Naive thymus-derived CD4-positive, alpha-beta T cell (primary cell): ENCODE measurements at regions of chr19 and their contacts with region 1.

Region 1: DNA sequence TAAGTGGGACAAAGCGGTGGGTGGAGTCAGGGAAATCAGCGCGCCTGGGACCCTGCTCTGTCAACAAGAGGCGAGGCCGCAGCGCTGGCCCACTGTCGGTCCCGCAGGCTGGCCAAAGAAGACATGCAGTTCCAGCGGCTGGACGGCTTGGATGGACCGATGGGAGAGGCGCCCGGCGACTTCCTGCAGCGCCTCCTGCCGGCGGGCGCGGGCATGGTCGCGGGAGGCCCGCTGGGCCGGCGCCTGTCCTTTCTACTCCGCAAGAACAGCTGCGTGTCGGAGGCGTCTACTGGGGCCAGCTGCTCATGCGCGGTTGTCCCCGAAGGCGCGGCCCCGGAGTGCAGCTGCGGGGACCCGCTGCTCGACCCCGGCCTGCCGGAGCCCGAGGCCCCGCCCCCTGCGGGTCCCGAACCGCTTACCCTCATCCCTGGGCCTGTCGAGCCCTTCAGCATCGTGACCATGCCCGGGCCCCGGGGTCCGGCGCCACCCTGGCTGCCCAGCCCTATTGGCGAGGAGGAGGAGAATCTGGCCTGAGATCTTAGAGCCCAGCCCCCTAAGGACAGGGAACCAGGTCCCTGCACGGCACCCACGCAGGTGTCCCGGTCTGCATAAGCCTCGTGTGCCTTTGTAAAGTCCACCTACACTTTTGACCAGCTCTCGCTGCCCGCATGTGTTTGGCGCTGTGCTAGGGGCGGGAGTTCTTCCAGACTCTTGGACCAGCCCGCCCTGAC is 6.1 kb downstream of the BEST2 start:
- DNase-seq: peak in 8 of 9 donors; percentile 40 to 84 (median 57)
- ATAC-seq: peak; percentile 87
- H3K4me3 ChIP-seq: peak overlapping the region; percentile 27
- H3K4me3 Mint-ChIP-seq: peak overlapping the region in 8 of 10 donors; percentile 13 to 64 (median 46)
- H3K27ac ChIP-seq: no peak overlapping the region
- H3K27ac Mint-ChIP-seq: no peak overlapping the region
- H3K4me1 ChIP-seq: peaks cover 0 to 7% of the 10 kb centered on the region in 2 donors
- H3K4me1 Mint-ChIP-seq: peaks cover 0 to 10% (median 8%) of the 10 kb centered on the region in 7 donors
- H3K27me3 ChIP-seq: no peaks in the 10 kb centered on the region
- H3K27me3 Mint-ChIP-seq: peaks cover 10 to 20% (median 11%) of the 10 kb centered on the region in 5 donors

Region 2: GRCh38 chr19:12564016-12564664 is 193.6 kb before region 1 on chr19:
- CTCF ChIA-PET with region 1: interaction called, 4 read pairs
- POLR2A ChIA-PET with region 1: no interaction called
- intact Hi-C with region 1: loop called (anchors 1 kb)
- DNase-seq: peak; percentile 79 to 96 (median 88)
- ATAC-seq: peak; percentile 100
- H3K4me3 ChIP-seq: no peak overlapping the region
- H3K4me3 Mint-ChIP-seq: peak overlapping the region in 1 of 10 donors; percentile 33
- H3K27ac ChIP-seq: no peak overlapping the region
- H3K27ac Mint-ChIP-seq: peak overlapping the region in 2 of 9 donors; percentile 3 to 51
- H3K4me1 ChIP-seq: no peaks in the 10 kb centered on the region
- H3K4me1 Mint-ChIP-seq: peaks cover 0 to 6% (median 5%) of the 10 kb centered on the region in 7 donors
- H3K27me3 ChIP-seq: no peaks in the 10 kb centered on the region
- H3K27me3 Mint-ChIP-seq: no peaks in the 10 kb centered on the region

Region 3: DNA sequence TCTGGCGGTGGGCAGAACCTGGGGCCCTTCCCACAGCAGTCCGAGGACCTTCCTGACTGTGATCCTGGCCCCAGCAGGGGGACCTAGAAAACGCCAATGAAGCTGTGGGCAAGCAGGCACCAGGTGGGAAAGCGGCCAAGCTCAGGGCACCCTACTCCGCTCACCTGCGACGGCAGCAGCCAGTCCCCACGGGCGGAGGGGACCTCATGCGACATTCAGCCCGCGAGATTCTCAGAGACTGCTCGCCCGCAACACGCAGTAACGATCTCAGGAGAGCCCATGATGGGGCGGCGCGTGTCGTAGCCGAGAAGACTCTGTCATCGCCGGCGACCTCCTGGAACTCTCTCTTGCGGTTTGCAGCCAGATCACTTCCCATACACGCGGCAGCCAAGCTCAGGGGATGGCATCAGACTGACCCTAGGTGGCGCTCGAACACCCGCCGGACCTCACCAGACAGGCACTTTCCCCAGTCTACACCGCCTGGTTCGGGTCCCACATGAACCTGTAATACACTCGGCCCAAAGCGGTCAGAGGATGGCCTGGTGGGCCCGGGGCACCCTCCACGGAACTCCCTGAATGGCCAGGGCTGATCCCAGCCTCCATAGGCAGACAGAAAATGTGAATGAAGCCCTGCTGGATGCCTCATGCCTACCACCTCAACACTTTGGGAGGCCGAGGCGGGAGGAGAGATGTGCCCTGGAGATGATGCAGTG is 117.7 kb before region 1 on chr19:
- CTCF ChIA-PET with region 1: no interaction called
- POLR2A ChIA-PET with region 1: no interaction called
- intact Hi-C with region 1: loop called in 1 of 2 experiments (anchors 1 kb)
- DNase-seq: peak; percentile 64 to 81 (median 78)
- ATAC-seq: peak; percentile 93
- H3K4me3 ChIP-seq: peak overlapping the region; percentile 40
- H3K4me3 Mint-ChIP-seq: peak overlapping the region; percentile 73 to 85 (median 80)
- H3K27ac ChIP-seq: peak overlapping the region; percentile 5
- H3K27ac Mint-ChIP-seq: peak overlapping the region; percentile 39 to 89 (median 82)
- H3K4me1 ChIP-seq: peaks cover 3 to 12% of the 10 kb centered on the region in 2 donors
- H3K4me1 Mint-ChIP-seq: peaks cover 12 to 28% (median 21%) of the 10 kb centered on the region in 7 donors
- H3K27me3 ChIP-seq: no peaks in the 10 kb centered on the region
- H3K27me3 Mint-ChIP-seq: no peaks in the 10 kb centered on the region

Region 4: DNA sequence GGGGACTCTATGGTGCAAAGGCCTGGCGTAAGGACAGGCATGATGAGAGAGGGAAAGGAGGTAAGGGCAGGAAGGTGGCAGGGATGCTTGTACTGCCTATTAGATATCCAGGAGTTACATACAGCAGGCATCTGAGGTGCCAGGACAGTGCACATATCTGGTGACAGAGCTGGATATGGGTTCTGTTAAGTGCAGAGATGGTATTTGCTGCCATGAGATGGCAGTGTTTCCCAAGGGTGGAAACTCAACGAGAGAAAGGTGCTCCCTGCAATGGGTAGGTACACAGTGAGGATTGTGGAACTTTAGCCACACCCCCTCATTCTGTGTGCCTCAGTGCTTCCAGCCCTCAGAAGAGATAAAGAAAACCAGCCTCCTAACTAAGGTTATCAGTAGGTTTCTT is 40.8 kb before region 1 on chr19:
- CTCF ChIA-PET with region 1: interaction called, 13 read pairs
- POLR2A ChIA-PET with region 1: interaction called, 3 read pairs
- intact Hi-C with region 1: loop called (anchors 1 kb)
- DNase-seq: peak in 7 of 9 donors; percentile 35 to 66 (median 55)
- ATAC-seq: peak; percentile 86
- H3K4me3 ChIP-seq: no peak overlapping the region
- H3K4me3 Mint-ChIP-seq: peak overlapping the region in 1 of 10 donors; percentile 51
- H3K27ac ChIP-seq: no peak overlapping the region
- H3K27ac Mint-ChIP-seq: peak overlapping the region in 6 of 9 donors; percentile 10 to 85 (median 68)
- H3K4me1 ChIP-seq: peaks cover 6 to 8% of the 10 kb centered on the region in 2 donors
- H3K4me1 Mint-ChIP-seq: peaks cover 13 to 29% (median 19%) of the 10 kb centered on the region in 7 donors
- H3K27me3 ChIP-seq: no peaks in the 10 kb centered on the region
- H3K27me3 Mint-ChIP-seq: no peaks in the 10 kb centered on the region

Region 5: GRCh38 chr19:12722566-12723380 is 34.9 kb before region 1 on chr19:
- CTCF ChIA-PET with region 1: interaction called, 13 read pairs
- POLR2A ChIA-PET with region 1: interaction called, 3 read pairs
- intact Hi-C with region 1: loop called (anchors 1 kb)
- DNase-seq: peak; percentile 66 to 97 (median 91)
- ATAC-seq: peak; percentile 96
- H3K4me3 ChIP-seq: peak overlapping the region; percentile 91
- H3K4me3 Mint-ChIP-seq: peak overlapping the region; percentile 86 to 96 (median 93)
- H3K27ac ChIP-seq: peak overlapping the region; percentile 85
- H3K27ac Mint-ChIP-seq: peak overlapping the region; percentile 89 to 97 (median 95)
- H3K4me1 ChIP-seq: peaks cover 11 to 16% of the 10 kb centered on the region in 2 donors
- H3K4me1 Mint-ChIP-seq: peaks cover 20 to 43% (median 38%) of the 10 kb centered on the region in 7 donors
- H3K27me3 ChIP-seq: no peaks in the 10 kb centered on the region
- H3K27me3 Mint-ChIP-seq: peaks cover 0 to 2% (median 0%) of the 10 kb centered on the region in 5 donors

Region 6: DNA sequence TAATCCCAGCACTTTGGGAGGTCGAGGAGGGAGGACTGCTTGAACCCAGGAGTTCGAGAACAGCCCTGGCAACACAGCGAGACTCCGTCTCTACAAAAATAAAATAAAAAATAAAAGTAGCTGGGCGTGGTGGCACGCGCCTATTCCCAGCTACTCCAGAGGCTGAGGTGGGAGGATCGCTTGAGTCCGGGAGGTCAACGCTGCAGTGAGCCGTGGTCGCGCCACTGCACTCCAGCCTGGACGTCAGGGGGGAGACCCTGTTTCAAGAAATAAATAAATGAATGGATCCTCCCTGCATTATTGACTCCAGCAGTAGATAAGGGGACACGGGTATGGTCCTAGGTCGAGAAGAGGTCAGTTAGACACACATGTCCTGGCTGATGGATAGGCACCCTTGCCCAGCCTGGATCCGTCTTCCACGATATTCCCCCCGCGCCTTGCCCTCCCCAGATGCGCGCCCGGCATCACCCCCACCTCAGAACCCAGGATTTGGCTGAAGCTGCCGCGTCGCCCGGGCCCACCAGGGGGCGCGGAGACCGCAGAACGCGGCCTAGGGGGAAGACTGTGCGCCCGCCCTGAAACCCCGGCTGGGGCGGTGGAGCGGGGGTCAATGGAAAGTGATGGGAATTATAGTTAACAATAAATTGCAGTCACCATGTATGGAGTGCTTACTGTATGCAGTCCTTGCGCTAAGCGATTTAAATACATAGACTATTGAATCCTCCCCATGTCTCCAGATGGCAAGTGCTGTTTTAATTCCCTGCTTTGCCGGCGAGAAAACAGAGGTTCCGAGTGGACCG is 19.7 kb after region 1 on chr19:
- CTCF ChIA-PET with region 1: interaction called, 38 read pairs
- POLR2A ChIA-PET with region 1: interaction called, 3 read pairs
- intact Hi-C with region 1: loop called in 1 of 2 experiments (anchors 2 kb)
- DNase-seq: peak; percentile 69 to 89 (median 82)
- ATAC-seq: peak; percentile 18
- H3K4me3 ChIP-seq: peak overlapping the region; percentile 76
- H3K4me3 Mint-ChIP-seq: peak overlapping the region; percentile 82 to 95 (median 87)
- H3K27ac ChIP-seq: peak overlapping the region; percentile 94
- H3K27ac Mint-ChIP-seq: peak overlapping the region; percentile 42 to 98 (median 94)
- H3K4me1 ChIP-seq: peaks cover 16 to 28% of the 10 kb centered on the region in 2 donors
- H3K4me1 Mint-ChIP-seq: peaks cover 20 to 45% (median 39%) of the 10 kb centered on the region in 7 donors
- H3K27me3 ChIP-seq: no peaks in the 10 kb centered on the region
- H3K27me3 Mint-ChIP-seq: no peaks in the 10 kb centered on the region

Region 7: GRCh38 chr19:12847159-12848139 is 89.7 kb after region 1 on chr19:
- CTCF ChIA-PET with region 1: interaction called, 121 read pairs
- POLR2A ChIA-PET with region 1: no interaction called
- intact Hi-C with region 1: loop called (anchors 1 kb)
- DNase-seq: peak; percentile 46 to 99 (median 72)
- ATAC-seq: peak; percentile 99
- H3K4me3 ChIP-seq: no peak overlapping the region
- H3K4me3 Mint-ChIP-seq: peak overlapping the region in 9 of 10 donors; percentile 41 to 70 (median 50)
- H3K27ac ChIP-seq: no peak overlapping the region
- H3K27ac Mint-ChIP-seq: peak overlapping the region in 1 of 9 donors; percentile 28
- H3K4me1 ChIP-seq: peaks cover 7 to 9% of the 10 kb centered on the region in 2 donors
- H3K4me1 Mint-ChIP-seq: peaks cover 0 to 4% (median 0%) of the 10 kb centered on the region in 7 donors
- H3K27me3 ChIP-seq: peaks cover 0 to 13% of the 10 kb centered on the region in 2 donors
- H3K27me3 Mint-ChIP-seq: peaks cover 9 to 39% (median 28%) of the 10 kb centered on the region in 5 donors